MCF 10A (cell line): ENCODE measurements at regions of chr12 and their contacts with region 1.

Region 1: DNA sequence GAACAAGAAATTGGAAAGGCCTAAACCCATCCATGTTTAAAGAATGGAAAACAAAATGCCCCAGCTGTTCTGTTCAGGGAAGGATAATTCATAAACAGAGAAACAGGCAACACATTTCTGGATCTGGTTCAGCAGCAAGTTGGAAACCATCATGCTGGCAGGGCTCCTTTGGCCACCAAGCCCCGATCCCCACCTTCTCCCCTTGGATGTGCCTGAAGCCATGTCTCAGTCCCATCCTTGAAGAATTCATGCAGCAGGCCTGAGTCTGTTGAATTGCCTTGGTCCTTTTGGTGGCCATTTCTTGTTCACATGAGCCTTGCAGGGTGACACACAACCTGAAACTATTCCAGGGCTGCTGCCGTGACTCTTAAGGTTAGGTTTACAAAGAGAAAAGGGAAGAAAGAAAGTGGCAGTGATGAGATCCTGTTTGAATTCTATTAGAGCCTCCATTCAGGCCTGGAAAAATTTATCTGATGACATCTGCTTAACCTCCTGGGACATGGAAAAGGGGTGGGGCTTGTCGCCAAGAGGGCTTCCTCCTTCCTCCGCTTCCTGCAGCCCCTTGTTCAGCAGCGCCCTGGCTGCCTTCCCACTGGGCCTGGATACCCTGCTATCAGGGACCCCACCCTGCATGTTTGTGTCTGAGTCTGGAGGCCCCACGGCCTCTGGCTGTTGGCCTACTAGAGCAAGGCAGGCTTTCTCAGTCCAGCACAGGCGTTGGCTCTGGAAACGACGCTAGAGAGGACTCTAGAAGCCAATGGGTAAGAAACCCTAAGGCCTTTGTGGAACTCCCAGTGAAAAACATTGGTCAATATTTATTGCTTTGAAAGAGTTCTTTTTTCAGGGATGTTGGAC is 341.9 kb downstream of the C12orf75 start:
- DNase-seq: no peak
- H3K4me3 Mint-ChIP-seq: no peak overlapping the region
- H3K27ac Mint-ChIP-seq: no peak overlapping the region
- H3K4me1 Mint-ChIP-seq: peaks cover 28% of the 10 kb centered on the region
- H3K27me3 Mint-ChIP-seq: no peaks in the 10 kb centered on the region
- CTCF ChIP-seq: no peak

Region 2: DNA sequence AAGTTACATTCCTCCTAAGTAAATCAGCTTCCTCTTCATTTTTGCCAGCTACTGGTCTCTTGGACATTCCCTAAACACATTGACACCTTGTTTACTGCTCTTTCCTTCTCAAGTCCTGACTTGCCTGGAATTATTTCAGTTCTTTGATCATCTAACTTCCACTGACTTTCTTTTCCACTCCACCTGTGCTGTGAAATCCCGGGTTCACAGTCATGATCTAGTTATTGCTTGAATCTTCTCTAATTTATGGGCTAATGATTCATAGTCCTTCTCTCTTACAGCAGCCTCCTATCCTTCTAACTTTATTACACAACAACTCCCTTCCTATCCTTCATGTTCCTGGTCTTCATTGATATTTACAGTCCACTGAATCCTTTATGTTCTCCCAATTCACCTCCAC is 81.8 kb before region 1 on chr12:
- CTCF ChIA-PET with region 1: no interaction called
- POLR2A ChIA-PET with region 1: interaction called, 10 read pairs
- intact Hi-C with region 1: no loop called
- DNase-seq: peak; percentile 33
- H3K4me3 Mint-ChIP-seq: no peak overlapping the region
- H3K27ac Mint-ChIP-seq: no peak overlapping the region
- H3K4me1 Mint-ChIP-seq: peaks cover 2% of the 10 kb centered on the region
- H3K27me3 Mint-ChIP-seq: no peaks in the 10 kb centered on the region
- CTCF ChIP-seq: no peak

Region 3: GRCh38 chr12:105616971-105617540 is 55.3 kb before region 1 on chr12:
- CTCF ChIA-PET with region 1: no interaction called
- POLR2A ChIA-PET with region 1: no interaction called
- intact Hi-C with region 1: no loop called
- DNase-seq: peak; percentile 7
- H3K4me3 Mint-ChIP-seq: no peak overlapping the region
- H3K27ac Mint-ChIP-seq: no peak overlapping the region
- H3K4me1 Mint-ChIP-seq: peaks cover 5% of the 10 kb centered on the region
- H3K27me3 Mint-ChIP-seq: no peaks in the 10 kb centered on the region
- CTCF ChIP-seq: no peak

Region 4: DNA sequence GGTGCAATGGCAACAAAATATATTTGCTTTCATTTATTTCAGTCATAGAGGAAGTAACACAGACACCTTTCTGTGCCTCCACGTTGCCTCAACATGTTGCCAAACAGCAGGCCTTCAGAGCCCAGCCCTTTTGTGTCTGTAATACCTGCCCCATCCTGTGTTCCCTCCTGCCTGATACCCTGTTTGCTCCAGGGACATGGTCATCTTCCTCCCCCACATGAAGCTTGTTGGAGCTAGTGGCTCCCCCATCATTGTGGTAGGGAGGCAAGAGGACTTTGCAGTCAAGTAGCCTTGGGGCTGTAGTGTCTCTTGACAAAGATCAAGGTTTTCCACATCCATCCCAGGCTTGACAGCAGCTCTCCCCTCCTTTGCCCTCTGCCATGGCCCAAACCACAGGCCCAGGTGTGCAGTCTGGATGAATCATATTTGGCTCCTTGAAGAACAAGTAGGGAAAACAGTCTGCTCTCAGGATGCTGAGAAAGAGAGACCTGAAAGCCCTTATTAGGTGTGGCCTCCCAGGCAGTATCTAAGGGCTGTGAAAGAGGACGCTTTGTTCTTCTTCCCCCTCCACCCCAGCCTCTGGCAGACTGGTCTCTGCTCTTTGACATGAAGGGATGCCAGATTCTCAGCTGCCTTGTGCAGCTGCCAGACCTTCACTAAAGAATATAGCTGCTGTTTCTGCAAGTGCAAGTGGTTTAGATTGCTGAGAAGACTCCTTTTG is 12.8 kb before region 1 on chr12:
- CTCF ChIA-PET with region 1: interaction called, 4 read pairs
- POLR2A ChIA-PET with region 1: interaction called, 30 read pairs
- intact Hi-C with region 1: no loop called
- DNase-seq: peak; percentile 71
- H3K4me3 Mint-ChIP-seq: no peak overlapping the region
- H3K27ac Mint-ChIP-seq: peak overlapping the region; percentile 77
- H3K4me1 Mint-ChIP-seq: peaks cover 31% of the 10 kb centered on the region
- H3K27me3 Mint-ChIP-seq: no peaks in the 10 kb centered on the region
- CTCF ChIP-seq: no peak

Region 5: GRCh38 chr12:105798256-105798845 is 126.0 kb after region 1 on chr12:
- CTCF ChIA-PET with region 1: no interaction called
- POLR2A ChIA-PET with region 1: no interaction called
- intact Hi-C with region 1: no loop called
- DNase-seq: no peak
- H3K4me3 Mint-ChIP-seq: no peak overlapping the region
- H3K27ac Mint-ChIP-seq: no peak overlapping the region
- H3K4me1 Mint-ChIP-seq: no peaks in the 10 kb centered on the region
- H3K27me3 Mint-ChIP-seq: no peaks in the 10 kb centered on the region
- CTCF ChIP-seq: no peak

Region 6: DNA sequence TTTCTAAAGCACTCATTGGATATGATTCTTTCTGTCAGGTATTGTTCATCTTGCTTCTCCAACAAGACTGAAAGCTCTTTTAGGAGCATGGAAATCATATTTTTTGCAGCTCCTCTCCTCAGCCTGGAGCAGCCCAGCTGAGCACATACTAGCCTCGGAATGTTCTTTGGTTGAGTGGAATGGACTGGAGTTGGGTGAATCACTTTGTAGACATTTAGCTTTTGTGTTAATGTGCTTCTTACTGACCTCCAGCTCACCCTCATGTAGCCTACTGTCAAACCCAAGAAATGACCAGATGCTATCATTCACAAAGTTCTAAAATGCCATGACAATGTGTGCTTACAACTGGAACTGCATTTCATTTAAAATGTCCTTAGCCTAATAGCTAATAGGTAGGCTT is 305.3 kb after region 1 on chr12:
- CTCF ChIA-PET with region 1: no interaction called
- POLR2A ChIA-PET with region 1: no interaction called
- intact Hi-C with region 1: no loop called
- DNase-seq: no peak
- H3K4me3 Mint-ChIP-seq: no peak overlapping the region
- H3K27ac Mint-ChIP-seq: no peak overlapping the region
- H3K4me1 Mint-ChIP-seq: no peaks in the 10 kb centered on the region
- H3K27me3 Mint-ChIP-seq: no peaks in the 10 kb centered on the region
- CTCF ChIP-seq: no peak

Region 7: GRCh38 chr12:106030210-106031175 is 358.1 kb after region 1 on chr12:
- CTCF ChIA-PET with region 1: no interaction called
- POLR2A ChIA-PET with region 1: no interaction called
- intact Hi-C with region 1: no loop called
- DNase-seq: peak; percentile 35
- H3K4me3 Mint-ChIP-seq: no peak overlapping the region
- H3K27ac Mint-ChIP-seq: no peak overlapping the region
- H3K4me1 Mint-ChIP-seq: peaks cover 6% of the 10 kb centered on the region
- H3K27me3 Mint-ChIP-seq: no peaks in the 10 kb centered on the region
- CTCF ChIP-seq: no peak